Activated CD4-positive, alpha-beta T cell treated with anti-CD3 and anti-CD28 coated beads for 36 hours (primary cell): ENCODE measurements at regions of chr16 and their contacts with region 1.

Region 1: GRCh38 chr16:3282730-3283524 is at the start of gene ZNF263:
- DNase-seq: peak; percentile 96
- ATAC-seq: peak; percentile 91
- H3K4me3 Mint-ChIP-seq: peak within 1 kb of the TSS; percentile 90
- H3K27ac Mint-ChIP-seq: peak within 1 kb of the TSS; percentile 97
- H3K4me1 Mint-ChIP-seq: peaks cover 24% of the 10 kb centered on the region
- H3K27me3 Mint-ChIP-seq: no peaks in the 10 kb centered on the region
- total RNA-seq, gene ZNF263: 19.2 to 19.6 TPM

Region 2: DNA sequence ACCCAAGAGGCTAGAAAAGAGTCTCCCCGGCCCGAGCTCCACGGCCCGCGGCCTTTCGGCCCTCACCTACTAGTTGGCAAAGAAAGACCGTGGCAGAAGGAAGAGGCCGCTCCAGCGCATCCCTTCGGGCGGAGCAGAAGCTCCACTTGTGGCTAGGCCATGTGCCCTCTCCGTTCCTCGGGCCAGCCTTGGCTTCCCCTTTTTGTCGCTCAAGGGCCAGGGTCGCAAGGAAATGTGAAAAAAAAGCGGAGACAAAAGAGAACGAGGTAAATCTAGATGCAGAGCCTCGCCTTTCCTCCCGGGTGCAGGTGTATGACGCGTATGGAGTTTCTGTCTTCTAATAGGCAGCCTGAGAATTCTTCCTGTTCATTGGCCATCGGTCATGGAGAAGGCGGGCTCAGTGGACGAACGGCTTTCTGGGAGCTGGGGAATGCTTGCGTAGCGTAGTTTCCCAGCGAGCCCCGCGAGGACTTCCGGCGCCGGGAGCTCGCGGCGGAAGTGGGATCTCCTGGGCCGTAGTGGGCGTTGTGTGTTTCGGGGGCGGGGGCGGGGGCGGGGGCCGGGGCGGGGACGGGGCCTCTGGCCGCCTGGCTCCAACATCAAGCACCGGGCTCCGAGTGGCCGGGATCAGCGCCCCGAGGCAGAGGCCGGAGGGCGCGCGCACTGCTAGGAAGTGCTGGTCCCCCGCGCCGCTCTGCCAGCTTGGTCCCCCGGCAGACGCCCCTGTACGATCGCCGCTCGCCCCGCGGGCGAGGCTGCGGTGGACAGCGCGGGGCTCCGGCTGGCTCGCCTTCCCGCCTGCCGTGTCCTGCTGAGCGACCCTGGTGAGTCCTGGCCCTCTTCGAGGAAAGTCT is 148.1 kb before region 1 on chr16 and contains the start of gene ZNF213:
- CTCF ChIA-PET with region 1: interaction called, 3 read pairs
- POLR2A ChIA-PET with region 1: interaction called, 3 read pairs
- intact Hi-C with region 1: loop called (anchors 1 kb)
- DNase-seq: peak; percentile 96
- ATAC-seq: peak; percentile 97
- H3K4me3 Mint-ChIP-seq: peak within 1 kb of the TSS; percentile 98
- H3K27ac Mint-ChIP-seq: peak within 1 kb of the TSS; percentile 95
- H3K4me1 Mint-ChIP-seq: peaks cover 30% of the 10 kb centered on the region
- H3K27me3 Mint-ChIP-seq: no peaks in the 10 kb centered on the region
- total RNA-seq, gene ZNF213: 7.6 to 8.3 TPM

Region 3: DNA sequence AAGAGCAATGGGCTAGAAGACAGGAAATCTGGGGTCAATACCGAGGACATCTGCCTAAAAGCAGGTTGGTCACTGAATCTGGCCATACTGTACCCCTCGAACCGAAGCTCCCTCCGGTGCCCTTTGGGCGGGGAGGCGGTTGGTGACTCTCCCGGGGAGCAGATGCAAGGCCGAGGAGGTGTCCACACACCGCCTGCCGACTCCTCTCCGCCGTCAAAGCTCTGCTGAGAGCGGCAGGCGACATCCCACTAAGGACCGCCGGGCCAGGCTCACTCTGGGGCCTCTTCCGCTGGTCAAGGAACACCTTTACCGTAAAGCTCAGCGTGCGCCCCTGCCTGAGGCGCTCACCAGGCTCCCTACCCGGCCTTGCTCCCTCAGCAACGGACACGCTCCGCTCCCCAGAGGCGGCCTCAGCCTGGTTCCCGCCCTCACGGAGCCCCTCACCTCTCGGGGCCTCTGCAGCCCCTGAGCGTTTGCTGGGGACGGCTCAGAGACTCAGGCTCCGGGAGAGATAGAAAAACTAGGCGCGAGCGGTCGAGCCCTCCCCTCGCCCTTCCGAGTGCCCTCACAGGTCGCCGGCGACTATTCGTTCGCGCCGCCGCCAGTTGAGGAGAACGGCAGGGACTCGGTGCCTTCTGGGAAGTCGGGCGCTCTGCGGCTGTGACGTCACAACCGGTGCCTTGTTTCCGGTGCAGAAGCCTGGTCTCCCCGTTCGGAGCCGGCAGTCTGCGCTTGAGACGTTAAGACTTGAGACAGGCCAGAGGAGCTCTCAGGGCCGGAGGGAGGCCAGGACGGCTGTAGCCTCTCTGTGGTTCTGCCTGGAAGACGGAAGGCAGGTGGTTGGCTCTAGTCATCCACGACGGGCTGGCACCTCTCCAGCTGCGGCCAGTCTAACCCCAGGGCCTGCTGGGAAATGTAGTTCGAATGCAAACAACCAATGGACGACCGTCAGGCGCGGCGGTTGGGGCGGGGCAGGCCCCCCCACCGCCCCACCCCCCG is 48.1 kb before region 1 on chr16 and contains the start of gene ZNF200:
- CTCF ChIA-PET with region 1: no interaction called
- POLR2A ChIA-PET with region 1: no interaction called
- intact Hi-C with region 1: loop called (anchors 1 to 2 kb)
- DNase-seq: peak; percentile 98
- ATAC-seq: peak; percentile 94
- H3K4me3 Mint-ChIP-seq: peak within 1 kb of the TSS; percentile 89
- H3K27ac Mint-ChIP-seq: peak within 1 kb of the TSS; percentile 96
- H3K4me1 Mint-ChIP-seq: peaks cover 30% of the 10 kb centered on the region
- H3K27me3 Mint-ChIP-seq: no peaks in the 10 kb centered on the region
- total RNA-seq, gene ZNF200: 8.3 to 9.0 TPM

Region 4: GRCh38 chr16:3364774-3365427 is 82.0 kb after region 1 on chr16:
- CTCF ChIA-PET with region 1: no interaction called
- POLR2A ChIA-PET with region 1: interaction called, 3 read pairs
- intact Hi-C with region 1: loop called in 1 of 2 experiments (anchors 1 kb)
- DNase-seq: peak; percentile 94
- ATAC-seq: peak; percentile 98
- H3K4me3 Mint-ChIP-seq: peak overlapping the region; percentile 76
- H3K27ac Mint-ChIP-seq: peak overlapping the region; percentile 91
- H3K4me1 Mint-ChIP-seq: peaks cover 8% of the 10 kb centered on the region
- H3K27me3 Mint-ChIP-seq: peaks cover 6% of the 10 kb centered on the region

Region 5: GRCh38 chr16:3457434-3458252 is 174.7 kb after region 1 on chr16:
- CTCF ChIA-PET with region 1: no interaction called
- POLR2A ChIA-PET with region 1: no interaction called
- intact Hi-C with region 1: loop called in 1 of 2 experiments (anchors 1 kb)
- DNase-seq: peak; percentile 93
- ATAC-seq: peak; percentile 86
- H3K4me3 Mint-ChIP-seq: peak overlapping the region; percentile 74
- H3K27ac Mint-ChIP-seq: peak overlapping the region; percentile 83
- H3K4me1 Mint-ChIP-seq: peaks cover 41% of the 10 kb centered on the region
- H3K27me3 Mint-ChIP-seq: no peaks in the 10 kb centered on the region